ENCODE measurements at regions of chr7 and their contacts with region 1.

Region 1: DNA sequence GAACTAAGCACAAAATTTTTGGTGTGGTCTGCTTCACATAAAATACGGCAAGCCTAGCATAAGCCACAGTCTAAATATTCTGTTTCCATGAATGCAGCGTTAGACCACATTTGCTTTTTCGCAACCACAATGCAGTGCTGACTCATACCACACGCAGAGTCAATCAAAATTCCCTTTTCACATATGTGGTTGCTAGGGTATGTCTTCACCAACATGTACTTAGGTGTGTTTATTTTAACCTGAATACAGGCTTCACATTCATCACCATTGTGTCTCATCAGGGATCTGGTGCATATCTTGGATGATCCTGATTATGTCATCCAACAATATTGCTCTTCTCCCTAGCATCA is 90.8 kb downstream of the CHN2 start:
- DNase-seq: peak; percentile 71
- ATAC-seq: peak; percentile 83
- H3K4me3 Mint-ChIP-seq: no peak overlapping the region
- H3K27ac Mint-ChIP-seq: no peak overlapping the region
- H3K4me1 Mint-ChIP-seq: peaks cover 26% of the 10 kb centered on the region
- H3K27me3 Mint-ChIP-seq: peaks cover 33% of the 10 kb centered on the region

Region 2: GRCh38 chr7:29113384-29114103 is 171.9 kb before region 1 on chr7:
- CTCF ChIA-PET with region 1: no interaction called
- POLR2A ChIA-PET with region 1: no interaction called
- intact Hi-C with region 1: loop called in 1 of 2 experiments (anchors 5 kb)
- DNase-seq: peak; percentile 36
- ATAC-seq: peak; percentile 81
- H3K4me3 Mint-ChIP-seq: no peak overlapping the region
- H3K27ac Mint-ChIP-seq: no peak overlapping the region
- H3K4me1 Mint-ChIP-seq: peaks cover 13% of the 10 kb centered on the region
- H3K27me3 Mint-ChIP-seq: peaks cover 12% of the 10 kb centered on the region

Region 3: GRCh38 chr7:29207162-29207801 is 78.1 kb before region 1 on chr7:
- CTCF ChIA-PET with region 1: no interaction called
- POLR2A ChIA-PET with region 1: no interaction called
- intact Hi-C with region 1: no loop called
- DNase-seq: no peak
- ATAC-seq: peak; percentile 70
- H3K4me3 Mint-ChIP-seq: no peak overlapping the region
- H3K27ac Mint-ChIP-seq: no peak overlapping the region
- H3K4me1 Mint-ChIP-seq: peaks cover 15% of the 10 kb centered on the region
- H3K27me3 Mint-ChIP-seq: no peaks in the 10 kb centered on the region

Region 4: GRCh38 chr7:29265208-29265923 is 20.1 kb before region 1 on chr7:
- CTCF ChIA-PET with region 1: interaction called, 3 read pairs
- POLR2A ChIA-PET with region 1: no interaction called
- intact Hi-C with region 1: loop called (anchors 1 to 2 kb)
- DNase-seq: peak; percentile 11
- ATAC-seq: peak; percentile 93
- H3K4me3 Mint-ChIP-seq: no peak overlapping the region
- H3K27ac Mint-ChIP-seq: no peak overlapping the region
- H3K4me1 Mint-ChIP-seq: peaks cover 10% of the 10 kb centered on the region
- H3K27me3 Mint-ChIP-seq: peaks cover 10% of the 10 kb centered on the region

Region 5: DNA sequence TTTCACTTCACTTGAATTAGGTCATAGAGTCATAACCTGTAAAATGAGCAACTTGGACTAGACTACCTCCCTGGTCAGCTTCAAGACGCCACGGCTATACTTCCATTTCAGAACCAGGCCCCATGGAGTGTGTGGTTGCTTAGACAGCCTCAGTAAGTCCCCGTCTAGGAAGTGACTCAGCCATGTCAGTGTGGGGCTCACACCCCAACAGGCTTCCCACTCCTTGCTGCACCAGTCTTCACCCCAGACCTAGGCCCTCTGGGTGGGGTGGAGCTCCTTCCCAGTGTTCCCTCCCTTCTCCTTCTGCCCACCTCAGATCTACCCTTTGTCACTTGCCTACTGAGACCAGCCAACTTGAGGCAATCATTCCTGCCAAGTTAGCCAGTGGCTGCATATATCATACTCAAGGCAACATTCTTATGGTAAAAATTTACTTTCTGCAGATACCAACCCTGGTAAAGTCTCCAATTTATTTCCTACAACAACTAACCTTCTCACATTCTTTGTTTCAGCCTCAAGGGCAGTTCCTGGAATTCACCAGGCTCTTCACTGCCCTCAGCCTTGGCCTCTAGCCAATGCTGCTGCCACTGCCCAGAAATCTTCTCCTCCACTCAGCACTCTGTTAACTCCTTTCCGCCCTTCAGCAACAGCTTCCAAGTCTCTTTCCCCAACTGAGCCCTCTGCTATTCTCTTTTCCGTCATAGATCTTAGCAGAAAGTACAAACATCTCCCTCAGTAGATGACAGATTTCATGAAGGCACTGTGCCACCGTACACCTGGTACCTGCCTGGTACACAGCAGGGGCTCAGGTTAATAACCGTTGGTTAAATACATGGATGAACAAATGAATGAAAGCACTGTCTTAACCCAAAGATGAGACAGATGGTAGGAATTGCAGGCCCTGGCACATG is 967.7 kb after region 1 on chr7:
- CTCF ChIA-PET with region 1: no interaction called
- POLR2A ChIA-PET with region 1: no interaction called
- intact Hi-C with region 1: no loop called
- DNase-seq: peak; percentile 12
- ATAC-seq: peak; percentile 70
- H3K4me3 Mint-ChIP-seq: no peak overlapping the region
- H3K27ac Mint-ChIP-seq: no peak overlapping the region
- H3K4me1 Mint-ChIP-seq: peaks cover 30% of the 10 kb centered on the region
- H3K27me3 Mint-ChIP-seq: no peaks in the 10 kb centered on the region